Psoas muscle (tissue), 8 donors: ENCODE measurements at regions of chr11 and their contacts with region 1.

Region 1: GRCh38 chr11:82698576-82699352 is 34.9 kb downstream of the FAM181B start:
- DNase-seq: no peak
- ATAC-seq: no peak
- H3K4me3 ChIP-seq: no peak overlapping the region
- H3K27ac ChIP-seq: no peak overlapping the region
- H3K4me1 ChIP-seq: no peaks in the 10 kb centered on the region
- H3K27me3 ChIP-seq: peaks cover 0 to 4% (median 2%) of the 10 kb centered on the region in 3 donors
- CTCF ChIP-seq: no peak

Region 2: GRCh38 chr11:81644239-81644840 is 1054.4 kb before region 1 on chr11:
- intact Hi-C with region 1: loop called in 1 of 2 experiments (anchors 10 kb)
- DNase-seq: no peak
- ATAC-seq: no peak
- H3K4me3 ChIP-seq: no peak overlapping the region
- H3K27ac ChIP-seq: no peak overlapping the region
- H3K4me1 ChIP-seq: no peaks in the 10 kb centered on the region
- H3K27me3 ChIP-seq: no peaks in the 10 kb centered on the region
- CTCF ChIP-seq: peak; percentile 33